Activated CD4-positive, alpha-beta T cell treated with anti-CD3 and anti-CD28 coated beads, Interleukin-2, amount 10 ng/mL, durations not matched to agents 24 days and 14 days (primary cell): ENCODE measurements at regions of chr10 and their contacts with region 1.

Region 1: GRCh38 chr10:62811159-62811875 is 4.8 kb downstream of the EGR2 start:
- DNase-seq: peak; percentile 90
- H3K4me3 Mint-ChIP-seq: peak overlapping the region; percentile 97
- H3K27ac Mint-ChIP-seq: peak overlapping the region; percentile 100
- H3K4me1 Mint-ChIP-seq: peaks cover 67% of the 10 kb centered on the region
- H3K27me3 Mint-ChIP-seq: peaks cover 1% of the 10 kb centered on the region

Region 2: DNA sequence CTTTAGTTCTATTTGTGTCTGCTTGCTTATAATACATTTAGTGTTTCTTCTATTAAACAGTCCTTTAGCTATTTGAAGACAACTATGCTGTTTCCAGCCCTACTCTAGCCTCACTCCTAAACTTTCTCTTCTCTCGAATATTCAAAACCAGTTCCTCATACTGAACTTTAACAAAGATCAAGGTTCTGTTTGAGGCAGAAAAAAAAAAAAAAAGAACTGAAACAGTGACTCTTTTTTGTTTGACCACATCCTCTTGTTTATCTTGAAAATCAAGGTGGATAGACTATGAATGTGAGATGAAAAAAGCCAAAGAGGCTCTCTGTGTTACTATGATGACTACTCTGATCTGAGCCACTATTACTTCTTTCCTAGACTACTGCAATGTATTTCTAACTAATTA is 282.9 kb before region 1 on chr10:
- intact Hi-C with region 1: loop called (anchors 1 kb)
- DNase-seq: peak; percentile 65
- H3K4me3 Mint-ChIP-seq: peak overlapping the region; percentile 27
- H3K27ac Mint-ChIP-seq: peak overlapping the region; percentile 39
- H3K4me1 Mint-ChIP-seq: peaks cover 33% of the 10 kb centered on the region
- H3K27me3 Mint-ChIP-seq: peaks cover 11% of the 10 kb centered on the region

Region 3: GRCh38 chr10:62726142-62726541 is 85.2 kb before region 1 on chr10:
- intact Hi-C with region 1: loop called (anchors 1 kb)
- DNase-seq: peak; percentile 68
- H3K4me3 Mint-ChIP-seq: peak overlapping the region; percentile 20
- H3K27ac Mint-ChIP-seq: peak overlapping the region; percentile 76
- H3K4me1 Mint-ChIP-seq: peaks cover 51% of the 10 kb centered on the region
- H3K27me3 Mint-ChIP-seq: peaks cover 1% of the 10 kb centered on the region

Region 4: DNA sequence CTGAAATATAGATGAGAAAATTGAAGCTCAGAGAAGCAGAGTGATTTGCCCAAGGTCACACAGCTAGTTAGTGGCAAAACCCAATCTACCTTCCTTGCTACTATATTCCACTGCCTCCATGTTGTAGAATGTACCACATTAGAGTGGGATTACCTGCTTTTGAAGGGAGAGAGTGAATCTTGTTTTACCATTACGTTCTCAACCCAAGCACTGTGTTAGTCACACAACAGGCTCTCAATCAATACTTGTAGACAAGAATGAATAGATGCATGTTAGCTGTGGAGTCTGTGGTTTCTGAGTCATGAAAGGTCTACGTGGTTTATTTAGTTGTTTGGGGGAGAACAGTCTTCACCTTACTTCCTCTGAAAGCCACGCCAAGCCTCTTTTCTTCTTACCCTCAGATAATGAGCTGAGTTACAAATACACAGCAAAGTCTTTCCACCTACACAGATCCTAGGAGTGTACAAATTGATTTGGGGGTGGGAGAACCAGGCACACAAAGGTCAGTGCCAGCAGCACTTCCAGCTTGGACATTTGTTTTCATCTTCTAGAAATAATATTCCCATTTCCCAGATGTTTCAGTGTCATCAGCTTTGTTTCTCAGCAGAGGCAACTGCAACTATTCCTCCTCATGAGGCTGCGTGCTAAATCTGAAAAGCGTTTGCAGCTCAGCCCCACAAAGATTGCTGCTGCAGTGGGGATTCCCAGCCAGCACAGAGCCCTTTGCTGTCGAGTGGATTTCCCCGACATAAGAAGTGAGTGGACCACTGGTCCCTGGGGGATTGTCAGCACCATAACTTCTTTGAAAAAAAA is 78.3 kb before region 1 on chr10:
- intact Hi-C with region 1: loop called (anchors 1 kb)
- DNase-seq: peak; percentile 91
- H3K4me3 Mint-ChIP-seq: no peak overlapping the region
- H3K27ac Mint-ChIP-seq: no peak overlapping the region
- H3K4me1 Mint-ChIP-seq: peaks cover 43% of the 10 kb centered on the region
- H3K27me3 Mint-ChIP-seq: peaks cover 1% of the 10 kb centered on the region

Region 5: GRCh38 chr10:62779487-62780248 is 31.6 kb before region 1 on chr10:
- intact Hi-C with region 1: loop called (anchors 1 kb)
- DNase-seq: peak; percentile 84
- H3K4me3 Mint-ChIP-seq: peak overlapping the region; percentile 42
- H3K27ac Mint-ChIP-seq: peak overlapping the region; percentile 68
- H3K4me1 Mint-ChIP-seq: peaks cover 31% of the 10 kb centered on the region
- H3K27me3 Mint-ChIP-seq: peaks cover 12% of the 10 kb centered on the region

Region 6: DNA sequence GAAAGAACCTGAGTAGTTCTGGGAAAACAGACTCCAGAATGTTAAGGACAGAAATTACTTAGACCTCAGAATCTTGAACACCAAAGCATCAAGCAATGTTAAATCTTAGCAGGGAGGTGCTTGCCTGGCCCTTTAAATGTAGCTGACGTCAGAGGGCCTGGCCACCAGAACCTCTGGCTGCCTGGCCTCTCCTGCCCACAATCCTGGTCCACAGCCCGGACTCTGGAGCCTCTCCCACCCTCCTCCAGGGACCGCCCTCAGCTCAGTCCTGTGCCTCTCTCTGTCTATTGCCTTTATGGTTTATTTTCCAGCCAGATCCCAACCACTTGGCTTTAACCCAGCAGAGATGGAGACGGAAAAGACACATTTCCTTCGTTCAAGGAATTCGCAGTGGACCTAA is 47.0 kb after region 1 on chr10:
- intact Hi-C with region 1: loop called (anchors 1 kb)
- DNase-seq: no peak
- H3K4me3 Mint-ChIP-seq: no peak overlapping the region
- H3K27ac Mint-ChIP-seq: no peak overlapping the region
- H3K4me1 Mint-ChIP-seq: peaks cover 60% of the 10 kb centered on the region
- H3K27me3 Mint-ChIP-seq: peaks cover 4% of the 10 kb centered on the region